ENCODE measurements at regions of chr20 and their contacts with region 1.

Region 1: GRCh38 chr20:56468316-56469082 is at the start of gene RTF2:
- DNase-seq: peak; percentile 94
- H3K4me3 ChIP-seq: peak within 1 kb of the TSS; percentile 91
- H3K27ac ChIP-seq: peak within 1 kb of the TSS; percentile 86
- H3K4me1 ChIP-seq: peaks cover 30% of the 10 kb centered on the region
- H3K27me3 ChIP-seq: no peaks in the 10 kb centered on the region
- CTCF ChIP-seq: no peak
- total RNA-seq, gene RTF2: 88.7 TPM

Region 2: DNA sequence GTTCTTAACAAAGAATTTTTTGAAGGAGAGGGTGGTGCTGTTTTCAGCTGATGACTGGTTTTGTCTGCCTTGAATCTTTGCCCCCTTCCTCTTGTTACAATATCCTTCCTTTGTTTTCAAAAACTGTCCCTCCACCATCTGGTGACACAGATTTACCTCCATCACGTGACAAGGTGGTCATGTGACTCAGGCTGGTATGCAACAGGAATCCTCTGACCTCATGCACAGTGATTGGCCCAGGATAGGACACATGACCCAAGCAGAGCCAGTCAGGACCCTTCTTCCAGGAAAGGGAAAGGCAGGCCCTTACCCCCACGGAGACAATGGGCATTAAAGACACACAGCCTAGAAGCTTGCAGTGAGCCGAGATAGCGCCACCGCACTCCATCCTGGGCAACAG is 304.7 kb before region 1 on chr20:
- intact Hi-C with region 1: no loop called
- DNase-seq: no peak
- H3K4me3 ChIP-seq: no peak overlapping the region
- H3K27ac ChIP-seq: no peak overlapping the region
- H3K4me1 ChIP-seq: no peaks in the 10 kb centered on the region
- H3K27me3 ChIP-seq: peaks cover 45% of the 10 kb centered on the region
- CTCF ChIP-seq: no peak

Region 3: DNA sequence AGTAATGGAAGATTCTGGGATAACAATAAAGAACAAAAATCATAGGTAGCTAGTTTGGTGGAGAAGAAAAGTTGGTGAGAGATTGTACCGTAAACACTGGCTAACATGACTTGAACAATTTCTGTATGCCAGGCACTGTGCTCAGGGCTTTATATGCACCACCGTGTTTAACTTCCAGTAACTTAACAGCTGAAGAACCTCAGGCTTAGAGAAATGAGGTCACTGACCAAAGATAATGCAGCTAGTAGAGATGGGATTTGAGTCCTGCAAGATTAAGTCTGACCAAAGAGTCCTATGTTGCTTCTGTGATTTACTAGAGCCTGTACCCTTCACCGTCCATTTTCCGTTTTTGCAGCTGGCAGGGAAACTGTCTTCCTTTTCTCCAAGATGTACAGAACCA is 73.3 kb before region 1 on chr20:
- intact Hi-C with region 1: loop called (anchors 5 kb)
- DNase-seq: no peak
- H3K4me3 ChIP-seq: no peak overlapping the region
- H3K27ac ChIP-seq: no peak overlapping the region
- H3K4me1 ChIP-seq: peaks cover 41% of the 10 kb centered on the region
- H3K27me3 ChIP-seq: no peaks in the 10 kb centered on the region
- CTCF ChIP-seq: no peak

Region 4: GRCh38 chr20:56411759-56412472 is 56.6 kb before region 1 on chr20 and contains the start of gene CASS4:
- intact Hi-C with region 1: no loop called
- DNase-seq: no peak
- H3K4me3 ChIP-seq: peak within 1 kb of the TSS; percentile 43
- H3K27ac ChIP-seq: peak within 1 kb of the TSS; percentile 75
- H3K4me1 ChIP-seq: peaks cover 42% of the 10 kb centered on the region
- H3K27me3 ChIP-seq: no peaks in the 10 kb centered on the region
- CTCF ChIP-seq: no peak
- total RNA-seq, gene CASS4: 0.47 TPM

Region 5: DNA sequence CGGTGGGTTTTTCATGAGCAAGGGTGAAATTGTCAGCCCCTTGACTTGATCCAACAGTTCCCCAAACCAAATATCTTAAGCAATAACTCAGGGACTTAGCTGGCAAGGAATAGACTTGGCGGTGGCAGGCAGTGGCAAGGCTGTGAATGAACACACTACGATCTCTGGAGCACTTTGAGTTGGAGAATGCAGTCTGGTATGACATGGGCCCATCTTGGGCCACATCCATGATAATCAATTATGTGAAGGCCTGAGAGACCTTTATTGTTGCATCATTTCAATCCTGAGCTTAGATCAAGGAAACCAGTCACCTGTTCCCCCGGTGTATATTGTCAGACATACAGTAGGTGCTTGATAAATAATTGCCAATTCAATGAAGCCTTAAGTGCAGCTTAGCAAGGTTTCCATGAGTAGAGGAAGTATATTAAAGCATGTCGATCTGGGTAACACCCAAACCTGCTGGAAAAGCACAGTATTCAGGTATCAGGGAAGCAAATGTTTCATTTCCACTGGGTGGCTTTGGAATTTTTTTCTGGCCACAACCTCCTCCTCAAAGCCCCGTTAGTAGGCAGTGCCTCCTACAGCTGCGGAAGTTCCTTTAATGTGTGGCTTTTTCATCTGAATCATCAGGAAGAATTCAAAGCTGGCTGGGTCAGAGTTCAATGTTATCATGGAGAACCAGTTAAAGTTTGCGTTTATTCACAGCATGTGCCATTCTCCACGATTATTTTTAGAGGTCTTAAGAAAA is 46.2 kb before region 1 on chr20:
- intact Hi-C with region 1: no loop called
- DNase-seq: no peak
- H3K4me3 ChIP-seq: no peak overlapping the region
- H3K27ac ChIP-seq: peak overlapping the region; percentile 53
- H3K4me1 ChIP-seq: peaks cover 18% of the 10 kb centered on the region
- H3K27me3 ChIP-seq: no peaks in the 10 kb centered on the region
- CTCF ChIP-seq: no peak